K562 (cell line): ENCODE measurements at regions of chr19 and their contacts with region 1.

Region 1: DNA sequence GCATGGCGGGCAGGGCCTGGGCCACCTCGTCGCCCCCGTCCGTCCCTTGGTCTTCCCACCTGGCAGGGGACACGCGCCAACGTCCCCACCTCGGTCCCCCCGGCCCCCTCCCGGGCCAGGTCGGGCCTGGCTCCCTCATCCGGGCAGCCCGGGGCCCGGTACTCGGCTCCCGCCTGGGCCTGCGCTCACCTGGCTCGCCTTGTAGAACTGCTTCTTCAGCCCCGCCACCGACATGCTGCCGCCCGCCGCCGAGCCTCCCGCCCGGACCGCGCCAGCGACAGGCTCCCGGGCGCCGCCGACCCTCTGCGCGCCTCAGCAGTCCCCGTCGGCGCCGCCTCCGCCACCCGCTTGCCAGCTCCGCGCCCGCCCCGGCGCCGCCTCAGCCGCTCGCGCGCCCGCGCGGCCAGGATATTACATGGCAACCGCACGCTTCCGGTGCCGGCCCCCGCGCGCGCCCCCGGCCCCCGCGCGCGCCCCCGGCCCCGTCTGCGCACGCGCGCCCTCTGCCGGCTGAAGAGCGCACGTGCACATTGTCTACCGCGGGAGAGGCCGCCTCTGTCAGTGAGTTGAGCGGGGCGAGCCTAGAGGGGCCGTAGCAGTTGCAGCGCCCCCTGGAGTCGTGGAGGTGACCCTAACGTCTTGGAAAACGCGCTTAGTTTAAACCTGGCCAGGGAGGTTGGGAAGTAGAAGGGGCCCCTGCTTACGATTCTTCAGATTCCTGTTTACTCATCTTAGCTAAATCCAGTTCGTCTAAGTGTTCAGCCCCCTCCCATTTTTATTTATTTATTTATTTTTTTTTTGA is at the start of gene SH3GL1:
- DNase-seq: peak; percentile 80 to 95 (median 86)
- ATAC-seq: peak; percentile 54
- H3K4me3 ChIP-seq: peak within 1 kb of the TSS; percentile 99
- H3K27ac ChIP-seq: peak within 1 kb of the TSS; percentile 94
- H3K4me1 ChIP-seq: peaks cover 22 to 23% of the 10 kb centered on the region in 2 experiments; a peak in 4 of 5 replicates
- H3K27me3 ChIP-seq: no peaks in the 10 kb centered on the region
- CTCF ChIP-seq: peak; percentile 93 to 98 (median 98)
- EP300 ChIP-seq: peak; percentile 62
- POLR2A ChIP-seq: no peak
- RAD21 ChIP-seq: peak; percentile 52 to 63
- polyA plus RNA-seq, gene SH3GL1: 1.7 to 2.1 TPM

Region 2: GRCh38 chr19:4267101-4267900 is 133.0 kb before region 1 on chr19:
- CTCF ChIA-PET with region 1: interaction called, 49 read pairs
- POLR2A ChIA-PET with region 1: interaction called, 5 read pairs
- in situ Hi-C with region 1: no loop called
- intact Hi-C with region 1: loop called (anchors 2 kb)
- DNase-seq: peak; percentile 80 to 88 (median 83)
- ATAC-seq: peak; percentile 98
- H3K4me3 ChIP-seq: no peak overlapping the region
- H3K27ac ChIP-seq: no peak overlapping the region
- H3K4me1 ChIP-seq: peaks cover 0 to 13% of the 10 kb centered on the region in 2 experiments; a peak in 2 of 5 replicates
- H3K27me3 ChIP-seq: no peaks in the 10 kb centered on the region
- CTCF ChIP-seq: peak; percentile 88 to 93 (median 91)
- EP300 ChIP-seq: no peak
- POLR2A ChIP-seq: peak; percentile 37; the same call in 1 of the 2 replicates
- RAD21 ChIP-seq: peak; percentile 68 to 88

Region 3: DNA sequence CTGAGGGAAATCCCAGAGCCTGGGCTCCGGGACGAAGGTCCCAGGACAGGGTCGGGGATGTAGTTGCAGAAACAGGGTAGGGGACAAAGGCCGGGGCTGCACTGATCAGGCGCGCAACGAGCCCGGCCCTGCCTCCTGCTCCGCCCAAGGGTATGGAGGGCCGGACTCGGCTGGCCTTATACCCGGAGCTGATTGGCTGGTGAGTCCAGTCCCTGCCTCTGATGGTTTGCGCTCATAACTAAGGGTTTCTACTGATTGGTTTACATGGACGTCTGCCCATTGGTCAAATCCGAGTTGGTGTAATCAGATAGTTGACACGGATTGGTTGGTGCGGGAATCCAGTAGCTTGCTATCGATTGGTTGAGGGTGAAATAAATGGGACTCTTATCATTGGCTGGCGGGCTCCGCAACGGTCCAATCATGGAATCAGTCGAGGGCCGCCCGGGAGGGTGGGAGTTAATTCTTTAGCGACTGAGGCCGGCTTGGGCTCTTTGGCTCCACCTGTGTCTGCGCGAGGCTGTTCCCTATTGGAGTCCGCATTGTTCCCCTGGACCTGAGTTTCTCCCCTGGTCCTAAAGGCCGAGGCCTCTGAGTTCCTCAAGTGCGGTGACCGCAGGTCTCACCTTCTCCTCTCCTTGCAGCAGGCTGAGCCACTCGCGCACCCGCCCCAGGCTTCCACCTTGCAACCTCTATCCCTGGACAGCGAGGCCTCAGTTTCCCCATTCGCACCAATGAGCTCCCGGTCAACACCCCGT is 57.5 kb before region 1 on chr19:
- CTCF ChIA-PET with region 1: no interaction called
- POLR2A ChIA-PET with region 1: no interaction called
- in situ Hi-C with region 1: no loop called
- intact Hi-C with region 1: loop called (anchors 2 kb)
- DNase-seq: peak; percentile 94 to 99 (median 96)
- ATAC-seq: peak; percentile 96
- H3K4me3 ChIP-seq: peak overlapping the region; percentile 77
- H3K27ac ChIP-seq: peak overlapping the region; percentile 89
- H3K4me1 ChIP-seq: peaks cover 13 to 41% of the 10 kb centered on the region in 2 experiments; a peak in 4 of 5 replicates
- H3K27me3 ChIP-seq: no peaks in the 10 kb centered on the region
- CTCF ChIP-seq: peak; percentile 42 to 53 (median 51); a peak in 5 of 6 replicates
- EP300 ChIP-seq: 0 out of 2 replicates have a peak, but pooled peaks have one; percentile 4
- POLR2A ChIP-seq: peak; percentile 87
- RAD21 ChIP-seq: no peak

Region 4: DNA sequence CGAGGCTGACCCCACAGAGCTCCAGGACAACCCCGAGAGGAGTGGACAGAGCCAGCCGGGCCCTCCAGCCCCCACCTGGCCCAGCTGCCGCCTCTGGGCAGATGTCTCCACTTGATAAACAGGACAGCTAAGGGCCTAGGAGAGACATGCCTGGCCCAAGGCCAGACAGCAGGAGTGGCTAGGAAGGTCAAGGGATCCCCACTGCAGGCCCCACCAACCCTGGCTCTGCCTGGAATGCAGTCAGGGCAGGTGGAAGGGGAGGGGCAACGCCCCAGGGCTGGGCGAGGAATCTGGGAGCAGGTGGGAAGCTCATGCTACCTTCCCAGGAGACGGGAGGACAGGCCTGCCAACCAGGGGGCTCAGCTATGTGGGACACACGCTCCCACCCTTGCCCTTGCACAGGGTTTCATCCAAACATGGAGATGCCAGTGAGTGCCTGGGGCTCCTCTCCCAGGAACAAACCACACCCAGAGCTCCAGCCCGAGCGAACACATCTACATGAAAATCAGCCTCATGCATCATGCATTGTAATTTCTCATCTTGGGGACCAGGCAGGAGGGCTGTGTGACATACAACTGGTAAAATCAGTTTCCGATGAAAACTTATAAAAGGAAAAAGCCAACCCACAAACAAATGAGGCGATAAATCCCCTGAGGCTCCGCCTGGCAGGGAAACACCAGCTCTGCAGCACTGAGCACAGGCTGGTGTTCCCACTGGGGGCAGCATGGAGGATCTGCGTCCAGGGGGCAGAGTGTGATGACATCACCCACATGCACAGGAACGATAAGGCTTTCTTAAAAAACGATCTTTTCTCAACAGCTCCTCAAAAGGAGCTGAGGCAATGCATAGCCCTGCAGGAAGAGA is 24.9 kb before region 1 on chr19:
- CTCF ChIA-PET with region 1: interaction called, 6 read pairs
- POLR2A ChIA-PET with region 1: interaction called, 16 read pairs
- in situ Hi-C with region 1: no loop called
- intact Hi-C with region 1: loop called (anchors 1 kb)
- DNase-seq: peak; percentile 78 to 95 (median 84)
- ATAC-seq: peak; percentile 75
- H3K4me3 ChIP-seq: peak overlapping the region; percentile 14; the same call in 1 of the 2 replicates
- H3K27ac ChIP-seq: peak overlapping the region; percentile 99
- H3K4me1 ChIP-seq: peaks cover 68 to 88% of the 10 kb centered on the region in 2 experiments
- H3K27me3 ChIP-seq: no peaks in the 10 kb centered on the region
- CTCF ChIP-seq: peak; percentile 87 to 94 (median 93)
- EP300 ChIP-seq: peak; percentile 94
- POLR2A ChIP-seq: no peak
- RAD21 ChIP-seq: peak; percentile 21 to 53

Region 5: GRCh38 chr19:4415352-4415751 is 15.0 kb after region 1 on chr19:
- CTCF ChIA-PET with region 1: no interaction called
- POLR2A ChIA-PET with region 1: interaction called, 24 read pairs
- in situ Hi-C with region 1: no loop called
- intact Hi-C with region 1: no loop called
- DNase-seq: no peak
- ATAC-seq: no peak
- H3K4me3 ChIP-seq: no peak overlapping the region
- H3K27ac ChIP-seq: no peak overlapping the region
- H3K4me1 ChIP-seq: peaks cover 4 to 19% of the 10 kb centered on the region in 2 experiments; a peak in 4 of 5 replicates
- H3K27me3 ChIP-seq: no peaks in the 10 kb centered on the region
- CTCF ChIP-seq: no peak
- EP300 ChIP-seq: no peak
- POLR2A ChIP-seq: no peak
- RAD21 ChIP-seq: no peak

Region 6: GRCh38 chr19:4638828-4639530 is 238.6 kb after region 1 on chr19 and contains the start of gene TNFAIP8L1:
- CTCF ChIA-PET with region 1: no interaction called
- POLR2A ChIA-PET with region 1: no interaction called
- in situ Hi-C with region 1: no loop called
- intact Hi-C with region 1: loop called (anchors 5 kb)
- DNase-seq: peak; percentile 96 to 100 (median 100)
- ATAC-seq: peak; percentile 92
- H3K4me3 ChIP-seq: peak within 1 kb of the TSS; percentile 71
- H3K27ac ChIP-seq: peak within 1 kb of the TSS; percentile 93
- H3K4me1 ChIP-seq: peaks cover 31 to 61% of the 10 kb centered on the region in 2 experiments
- H3K27me3 ChIP-seq: no peaks in the 10 kb centered on the region
- CTCF ChIP-seq: no peak
- EP300 ChIP-seq: peak; percentile 63; the same call in 1 of the 2 replicates
- POLR2A ChIP-seq: no peak; the same call in 1 of the 2 replicates
- RAD21 ChIP-seq: no peak
- polyA plus RNA-seq, gene TNFAIP8L1: 0.69 to 1.0 TPM